ENCODE measurements at regions of chr3 and their contacts with region 1.

Region 1: GRCh38 chr3:194277786-194278130 is 73.4 kb downstream of the CPN2 start:
- DNase-seq: peak; percentile 90
- H3K4me3 ChIP-seq: no peak overlapping the region
- H3K27ac ChIP-seq: peak overlapping the region; percentile 84 to 92 (median 90)
- H3K4me1 ChIP-seq: peaks cover 0 to 65% (median 50%) of the 10 kb centered on the region in 4 donors
- H3K27me3 ChIP-seq: no peaks in the 10 kb centered on the region
- CTCF ChIP-seq: no peak
- EP300 ChIP-seq: no peak
- POLR2A ChIP-seq: no peak

Region 2: GRCh38 chr3:194203482-194204041 is 74.2 kb before region 1 on chr3:
- intact Hi-C with region 1: no loop called
- DNase-seq: no peak
- H3K4me3 ChIP-seq: peak overlapping the region in 2 of 4 donors; percentile 41 to 43
- H3K27ac ChIP-seq: no peak overlapping the region
- H3K4me1 ChIP-seq: peaks cover 0 to 26% (median 21%) of the 10 kb centered on the region in 4 donors
- H3K27me3 ChIP-seq: peaks cover 7 to 25% (median 13%) of the 10 kb centered on the region in 3 donors
- CTCF ChIP-seq: no peak
- EP300 ChIP-seq: no peak
- POLR2A ChIP-seq: no peak

Region 3: GRCh38 chr3:194310060-194310835 is 32.5 kb after region 1 on chr3:
- intact Hi-C with region 1: loop called (anchors 2 kb)
- DNase-seq: peak; percentile 60
- H3K4me3 ChIP-seq: no peak overlapping the region
- H3K27ac ChIP-seq: peak overlapping the region in 2 of 4 donors; percentile 16 to 19
- H3K4me1 ChIP-seq: peaks cover 0 to 39% (median 36%) of the 10 kb centered on the region in 4 donors
- H3K27me3 ChIP-seq: no peaks in the 10 kb centered on the region
- CTCF ChIP-seq: no peak
- EP300 ChIP-seq: no peak
- POLR2A ChIP-seq: no peak

Region 4: DNA sequence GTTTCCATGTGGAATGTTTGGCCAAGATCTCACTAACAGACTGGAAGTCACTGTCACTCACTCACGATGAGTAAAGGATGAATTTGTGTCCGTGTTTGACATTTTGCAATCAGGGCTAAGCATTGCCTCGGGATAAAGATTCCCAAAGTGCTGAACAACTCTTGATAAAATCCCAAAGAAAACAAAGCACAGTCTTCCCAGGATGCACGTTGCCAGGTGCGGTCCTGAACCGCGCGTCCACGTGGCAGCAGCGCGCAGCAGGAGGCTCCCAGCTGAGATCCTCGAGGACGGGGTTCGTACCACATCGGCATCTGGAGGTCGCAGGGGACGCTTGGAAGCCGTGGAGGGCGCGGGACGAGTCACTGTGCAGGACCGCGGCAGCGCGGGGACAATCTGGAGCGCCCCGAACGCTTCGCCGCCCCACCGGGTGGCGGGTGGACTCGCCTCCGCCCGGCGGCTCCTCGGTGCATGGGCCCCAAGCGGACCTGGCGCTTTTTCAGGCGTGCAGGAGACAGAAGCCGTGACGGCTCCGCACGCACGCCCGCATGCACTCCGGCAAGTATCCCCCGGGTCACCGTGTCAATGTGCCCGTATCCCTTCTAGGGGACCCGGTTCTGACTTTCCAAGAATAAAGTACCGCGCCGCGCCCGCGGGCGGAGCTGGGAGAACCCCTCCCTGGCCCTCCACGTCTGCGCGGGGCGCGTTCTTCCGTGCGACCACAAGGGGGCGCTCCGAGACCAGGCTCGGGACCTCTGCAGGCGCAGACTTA is 55.6 kb after region 1 on chr3:
- intact Hi-C with region 1: no loop called
- DNase-seq: peak; percentile 90
- H3K4me3 ChIP-seq: peak overlapping the region; percentile 11 to 48 (median 39)
- H3K27ac ChIP-seq: no peak overlapping the region
- H3K4me1 ChIP-seq: peaks cover 0 to 21% (median 11%) of the 10 kb centered on the region in 4 donors
- H3K27me3 ChIP-seq: peaks cover 0 to 14% (median 0%) of the 10 kb centered on the region in 3 donors
- CTCF ChIP-seq: peak; percentile 96 to 99 (median 98)
- EP300 ChIP-seq: no peak
- POLR2A ChIP-seq: no peak

Region 5: DNA sequence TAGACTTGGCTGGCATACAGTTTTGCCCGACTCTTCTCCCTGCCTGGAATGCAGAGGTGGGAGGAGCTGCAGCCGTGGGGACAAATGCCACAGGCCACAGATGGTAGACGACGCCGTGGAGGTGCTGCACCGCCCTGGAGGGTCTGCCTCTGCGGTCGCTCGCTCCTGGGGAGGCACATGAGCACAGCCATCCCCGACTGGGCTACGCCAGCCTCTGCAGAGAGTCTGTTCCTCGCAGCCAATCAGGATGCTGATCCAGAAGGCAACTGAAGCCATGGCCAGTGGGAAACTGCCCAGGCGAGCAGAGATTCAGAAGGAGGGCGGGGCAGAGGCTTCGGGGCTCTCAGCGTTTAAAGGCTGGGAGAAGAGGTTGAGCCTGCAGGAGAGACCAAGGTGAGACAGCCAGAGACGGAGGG is 103.7 kb after region 1 on chr3:
- intact Hi-C with region 1: no loop called
- DNase-seq: no peak
- H3K4me3 ChIP-seq: peak overlapping the region in 1 of 4 donors; percentile 12
- H3K27ac ChIP-seq: no peak overlapping the region
- H3K4me1 ChIP-seq: peaks cover 0 to 6% (median 3%) of the 10 kb centered on the region in 4 donors
- H3K27me3 ChIP-seq: peaks cover 0 to 7% (median 0%) of the 10 kb centered on the region in 3 donors
- CTCF ChIP-seq: no peak
- EP300 ChIP-seq: no peak
- POLR2A ChIP-seq: no peak

Region 6: DNA sequence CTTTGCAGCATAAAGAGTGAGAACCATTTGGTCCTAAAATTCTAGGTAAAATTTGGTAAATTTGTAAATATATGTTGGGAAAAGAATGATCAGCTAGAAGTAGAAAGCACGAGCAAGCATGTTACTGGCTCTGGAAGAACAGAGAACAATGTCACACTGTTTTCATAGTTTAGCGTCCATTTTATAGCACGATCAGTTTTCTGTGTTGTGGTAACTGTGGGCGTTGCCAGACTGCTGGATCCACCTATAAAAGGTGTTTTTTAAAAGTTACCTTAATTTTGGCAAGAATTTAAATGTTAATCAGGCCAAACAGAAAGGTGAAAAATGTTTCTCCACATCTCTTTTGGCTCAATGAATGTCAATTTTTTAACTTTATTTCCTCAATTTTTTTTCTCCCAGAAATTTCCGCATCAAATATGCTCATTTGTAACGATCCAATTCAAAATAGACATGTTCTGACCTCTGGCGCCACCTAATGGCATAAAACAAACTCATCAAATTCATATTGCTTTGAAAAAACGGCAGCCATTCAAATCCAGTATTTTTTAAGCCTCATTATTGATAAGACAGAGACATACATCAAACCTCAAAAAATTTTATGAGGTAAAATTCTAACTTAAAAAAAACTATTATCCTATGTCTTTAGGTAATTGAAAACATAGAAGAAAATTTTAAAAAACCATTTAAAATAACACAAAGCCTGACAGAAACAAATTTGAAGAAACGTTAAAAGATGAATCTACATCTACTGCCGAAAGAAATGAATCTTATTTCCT is 126.8 kb after region 1 on chr3:
- intact Hi-C with region 1: no loop called
- DNase-seq: no peak
- H3K4me3 ChIP-seq: no peak overlapping the region
- H3K27ac ChIP-seq: no peak overlapping the region
- H3K4me1 ChIP-seq: no peaks in the 10 kb centered on the region
- H3K27me3 ChIP-seq: peaks cover 0 to 7% (median 5%) of the 10 kb centered on the region in 3 donors
- CTCF ChIP-seq: peak; percentile 19 to 71 (median 59)
- EP300 ChIP-seq: no peak
- POLR2A ChIP-seq: no peak

Measured in sigmoid colon (tissue), 7 donors.